Heart right ventricle (tissue), 16 donors: ENCODE measurements at regions of chr11 and their contacts with region 1.

Region 1: DNA sequence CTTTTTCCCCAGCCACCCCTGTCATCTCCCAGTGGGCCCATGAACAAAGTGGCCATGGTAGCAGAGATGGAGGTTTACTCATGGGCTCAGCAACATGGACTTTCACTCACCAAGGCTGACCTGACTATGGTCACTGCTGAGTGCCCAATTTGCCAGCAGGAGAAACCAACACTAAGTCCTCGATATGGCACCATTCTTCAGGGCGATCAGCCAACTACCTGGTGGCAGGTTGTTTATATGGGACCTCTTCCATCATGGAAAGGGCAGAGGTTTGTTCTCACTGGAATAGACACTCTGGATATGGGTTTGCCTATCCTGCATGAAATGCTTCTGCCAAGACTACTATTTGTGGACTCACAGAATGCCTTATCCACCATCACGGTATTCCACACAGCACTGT is 1009.1 kb downstream of the NTM start:
- DNase-seq: no peak
- ATAC-seq: no peak
- H3K4me3 ChIP-seq: no peak overlapping the region
- H3K27ac ChIP-seq: no peak overlapping the region
- H3K4me1 ChIP-seq: no peaks in the 10 kb centered on the region
- H3K27me3 ChIP-seq: no peaks in the 10 kb centered on the region
- CTCF ChIP-seq: no peak

Region 2: GRCh38 chr11:132337819-132338416 is 41.6 kb before region 1 on chr11:
- intact Hi-C with region 1: loop called in 1 of 10 experiments (anchors 2 kb)
- DNase-seq: no peak
- ATAC-seq: no peak
- H3K4me3 ChIP-seq: no peak overlapping the region
- H3K27ac ChIP-seq: no peak overlapping the region
- H3K4me1 ChIP-seq: peaks cover 0 to 13% (median 0%) of the 10 kb centered on the region in 9 donors
- H3K27me3 ChIP-seq: no peaks in the 10 kb centered on the region
- CTCF ChIP-seq: no peak

Region 3: GRCh38 chr11:132540581-132540980 is 161.0 kb after region 1 on chr11:
- intact Hi-C with region 1: no loop called
- DNase-seq: no peak
- ATAC-seq: peak in 2 of 8 donors; percentile 60 to 67
- H3K4me3 ChIP-seq: no peak overlapping the region
- H3K27ac ChIP-seq: no peak overlapping the region
- H3K4me1 ChIP-seq: peaks cover 0 to 7% (median 0%) of the 10 kb centered on the region in 9 donors
- H3K27me3 ChIP-seq: no peaks in the 10 kb centered on the region
- CTCF ChIP-seq: no peak